ENCODE measurements at regions of chr13 and their contacts with region 1.

Region 1: DNA sequence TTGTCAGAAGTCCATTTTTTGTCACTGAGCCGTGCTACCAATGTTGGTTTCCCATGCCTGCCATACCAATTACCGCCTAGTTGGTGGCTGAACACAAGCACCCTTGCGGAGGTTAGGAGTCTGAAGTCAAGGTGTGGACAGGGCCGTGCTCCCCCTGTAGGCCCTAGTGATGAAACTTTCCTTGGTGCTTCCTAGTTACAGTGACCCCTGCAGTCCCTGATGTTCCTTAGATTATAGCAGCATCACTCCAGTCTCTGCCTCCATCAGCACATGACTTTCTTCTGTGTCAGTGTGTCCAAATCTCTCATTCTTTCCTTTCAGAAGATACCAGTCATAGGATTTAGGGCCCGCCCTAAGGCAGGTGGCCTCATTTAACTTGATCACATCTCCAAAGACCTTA is 99.0 kb downstream of the MYO16 start:
- DNase-seq: peak; percentile 52 to 67
- H3K4me3 ChIP-seq: no peak overlapping the region
- H3K27ac ChIP-seq: no peak overlapping the region
- H3K4me1 ChIP-seq: no peaks in the 10 kb centered on the region
- H3K27me3 ChIP-seq: peaks cover 0 to 1% (median 0%) of the 10 kb centered on the region in 4 experiments; a peak in 1 of 7 replicates
- CTCF ChIP-seq: peak; percentile 84 to 99 (median 96)
- EP300 ChIP-seq: no peak
- POLR2A ChIP-seq: no peak
- RAD21 ChIP-seq: peak; percentile 70 to 72

Region 2: DNA sequence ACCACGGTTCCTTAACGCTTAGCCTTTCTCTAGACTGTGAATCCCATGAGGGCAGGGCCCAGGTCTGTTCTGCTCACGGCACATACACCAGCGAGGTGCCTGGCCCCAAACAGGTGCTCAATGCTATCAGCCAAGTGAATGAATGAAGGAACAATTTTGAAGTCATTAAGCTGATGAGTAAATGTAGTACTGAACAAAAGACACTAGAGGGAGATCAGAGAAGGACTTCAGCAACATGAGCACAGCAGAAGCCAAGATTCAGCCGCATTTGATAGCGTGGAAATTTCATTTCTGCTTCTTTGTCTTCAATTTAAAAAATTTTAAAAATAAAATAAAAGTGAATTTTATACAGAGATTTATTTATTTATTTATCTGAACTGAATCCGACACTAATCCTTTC is 119.0 kb before region 1 on chr13:
- CTCF ChIA-PET with region 1: interaction called, 10 read pairs
- POLR2A ChIA-PET with region 1: no interaction called
- DNase-seq: no peak
- H3K4me3 ChIP-seq: no peak overlapping the region
- H3K27ac ChIP-seq: no peak overlapping the region
- H3K4me1 ChIP-seq: no peaks in the 10 kb centered on the region
- H3K27me3 ChIP-seq: no peaks in the 10 kb centered on the region
- CTCF ChIP-seq: peak in 2 of 3 experiments; percentile 43 to 51; a peak in 2 of 4 replicates
- EP300 ChIP-seq: no peak
- POLR2A ChIP-seq: no peak
- RAD21 ChIP-seq: peak; percentile 60 to 65

Region 3: DNA sequence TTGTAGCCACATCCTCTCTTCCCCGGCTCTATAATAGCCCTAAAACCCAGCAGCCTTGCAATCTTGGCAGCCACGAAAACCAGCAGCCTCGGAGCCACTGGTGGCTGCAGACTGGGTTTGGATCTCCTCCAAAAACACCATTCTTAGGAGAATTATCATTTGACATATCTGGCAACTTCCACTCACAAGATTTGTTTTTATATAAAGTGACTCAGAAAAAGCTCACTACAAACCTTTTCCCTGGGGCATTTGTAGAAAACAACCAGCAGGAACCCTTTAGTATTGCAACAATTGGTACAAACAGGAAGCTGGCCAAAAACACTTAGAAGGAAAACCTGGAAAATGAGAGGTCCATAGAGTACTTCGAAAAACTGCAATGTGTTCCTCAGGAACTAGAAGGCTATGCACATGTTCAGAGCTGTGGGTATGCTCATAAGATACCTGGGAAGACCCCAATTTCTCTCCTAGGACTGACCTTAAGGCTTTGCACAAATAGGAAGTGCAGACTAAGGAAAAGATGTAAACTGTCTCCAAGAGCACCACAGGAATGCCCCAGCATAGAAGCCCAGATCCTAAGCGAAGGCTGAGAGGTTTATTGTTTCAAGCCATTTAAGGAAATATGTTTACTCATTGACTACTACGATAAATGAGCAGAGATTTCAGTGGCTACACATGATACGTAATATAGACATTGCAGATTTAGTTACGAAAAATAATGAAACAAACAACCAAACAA is 27.8 kb before region 1 on chr13:
- CTCF ChIA-PET with region 1: no interaction called
- POLR2A ChIA-PET with region 1: no interaction called
- DNase-seq: no peak
- H3K4me3 ChIP-seq: no peak overlapping the region
- H3K27ac ChIP-seq: no peak overlapping the region
- H3K4me1 ChIP-seq: no peaks in the 10 kb centered on the region
- H3K27me3 ChIP-seq: peaks cover 0 to 1% (median 0%) of the 10 kb centered on the region in 4 experiments; a peak in 1 of 7 replicates
- CTCF ChIP-seq: no peak
- EP300 ChIP-seq: no peak
- POLR2A ChIP-seq: no peak
- RAD21 ChIP-seq: no peak

Measured in H1 (cell line).